HepG2 (cell line): ENCODE measurements at regions of chr15 and their contacts with region 1.

Region 1: GRCh38 chr15:70679919-70680231 is 83.5 kb downstream of the UACA start:
- DNase-seq: no peak
- ATAC-seq: no peak
- H3K4me3 ChIP-seq: no peak overlapping the region
- H3K27ac ChIP-seq: no peak overlapping the region
- H3K4me1 ChIP-seq: no peaks in the 10 kb centered on the region
- H3K27me3 ChIP-seq: no peaks in the 10 kb centered on the region
- CTCF ChIP-seq: no peak
- EP300 ChIP-seq: no peak
- POLR2A ChIP-seq: no peak
- RAD21 ChIP-seq: no peak

Region 2: GRCh38 chr15:70722266-70723121 is 42.6 kb after region 1 on chr15:
- CTCF ChIA-PET with region 1: interaction called, 17 read pairs
- POLR2A ChIA-PET with region 1: no interaction called
- in situ Hi-C with region 1: no loop called
- intact Hi-C with region 1: loop called (anchors 1 kb)
- DNase-seq: peak; percentile 35
- ATAC-seq: no peak
- H3K4me3 ChIP-seq: no peak overlapping the region
- H3K27ac ChIP-seq: no peak overlapping the region
- H3K4me1 ChIP-seq: peaks cover 10% of the 10 kb centered on the region
- H3K27me3 ChIP-seq: no peaks in the 10 kb centered on the region
- CTCF ChIP-seq: peak; percentile 56
- EP300 ChIP-seq: no peak
- POLR2A ChIP-seq: no peak
- RAD21 ChIP-seq: no peak

Region 3: DNA sequence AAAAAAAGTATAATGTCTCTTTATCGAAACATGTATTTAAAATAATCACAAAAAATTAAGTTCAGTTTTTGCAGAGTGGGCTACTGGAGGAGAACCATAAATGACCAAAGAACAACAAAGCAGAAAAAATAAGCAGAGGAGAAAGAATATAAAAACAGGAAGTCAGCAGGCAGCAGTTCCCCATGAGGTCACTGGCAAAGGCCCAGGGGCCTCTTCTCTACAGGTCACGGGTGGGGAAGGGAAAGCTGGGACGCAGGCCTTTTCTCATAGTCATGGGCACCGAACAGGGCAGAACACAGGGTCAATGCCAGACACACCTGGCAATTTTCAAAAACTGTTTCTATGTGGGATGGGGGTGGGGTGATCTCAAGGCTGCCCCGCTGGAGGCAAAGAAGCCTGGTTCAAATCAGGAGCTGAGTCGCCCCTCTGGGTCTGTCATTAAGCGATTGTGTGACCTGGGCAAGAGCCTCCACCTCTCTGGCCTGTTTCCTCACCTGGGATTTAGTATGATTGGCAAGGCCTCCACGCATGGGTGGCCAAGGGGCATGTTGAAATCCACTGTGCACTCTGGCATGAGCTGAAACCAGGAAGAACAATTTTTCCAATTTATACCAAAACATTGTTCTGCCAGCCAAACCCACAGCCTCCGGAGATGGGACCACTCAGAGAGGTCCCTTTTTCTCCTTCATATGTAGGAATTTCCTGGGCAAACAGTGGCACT is 127.3 kb after region 1 on chr15:
- CTCF ChIA-PET with region 1: interaction called, 7 read pairs
- POLR2A ChIA-PET with region 1: no interaction called
- in situ Hi-C with region 1: loop called (anchors 5 kb)
- intact Hi-C with region 1: loop called (anchors 1 kb)
- DNase-seq: no peak
- ATAC-seq: no peak
- H3K4me3 ChIP-seq: no peak overlapping the region
- H3K27ac ChIP-seq: no peak overlapping the region
- H3K4me1 ChIP-seq: peaks cover 16% of the 10 kb centered on the region; the same call in 1 of the 2 replicates
- H3K27me3 ChIP-seq: peaks cover 0 to 28% of the 10 kb centered on the region in 2 experiments; a peak in 4 of 5 replicates
- CTCF ChIP-seq: no peak
- EP300 ChIP-seq: no peak
- POLR2A ChIP-seq: no peak
- RAD21 ChIP-seq: no peak

Region 4: DNA sequence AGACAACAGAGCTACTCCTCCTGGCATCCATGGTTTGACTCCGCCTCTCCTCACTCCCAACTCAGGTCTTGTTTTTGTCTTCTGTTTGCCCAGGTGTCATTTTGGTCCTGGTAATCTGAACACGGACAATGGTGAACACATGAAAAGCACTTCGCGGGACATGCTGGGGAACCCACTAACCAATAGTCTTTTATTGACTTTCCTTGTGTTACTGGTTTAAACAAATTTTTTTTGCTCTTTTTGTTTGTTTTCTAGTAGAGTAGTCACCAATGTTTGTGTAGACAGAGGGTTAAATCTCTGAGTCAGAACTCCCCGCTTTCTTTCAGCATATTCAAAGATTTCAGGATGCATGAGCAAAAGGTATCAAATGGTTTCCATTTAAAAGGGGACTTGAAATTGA is 135.8 kb after region 1 on chr15:
- CTCF ChIA-PET with region 1: interaction called, 7 read pairs
- POLR2A ChIA-PET with region 1: no interaction called
- in situ Hi-C with region 1: no loop called
- intact Hi-C with region 1: loop called (anchors 1 kb)
- DNase-seq: peak; percentile 57
- ATAC-seq: peak; percentile 43; the same call in 1 of the 3 replicates
- H3K4me3 ChIP-seq: no peak overlapping the region
- H3K27ac ChIP-seq: no peak overlapping the region
- H3K4me1 ChIP-seq: peaks cover 22% of the 10 kb centered on the region
- H3K27me3 ChIP-seq: peaks cover 2 to 3% of the 10 kb centered on the region in 2 experiments; a peak in 2 of 5 replicates
- CTCF ChIP-seq: no peak
- EP300 ChIP-seq: peak in 1 of 2 experiments; percentile 29; a peak in 1 of 4 replicates
- POLR2A ChIP-seq: no peak
- RAD21 ChIP-seq: no peak